Aorta (tissue), 5 donors: ENCODE measurements at regions of chr10 and their contacts with region 1.

Region 1: DNA sequence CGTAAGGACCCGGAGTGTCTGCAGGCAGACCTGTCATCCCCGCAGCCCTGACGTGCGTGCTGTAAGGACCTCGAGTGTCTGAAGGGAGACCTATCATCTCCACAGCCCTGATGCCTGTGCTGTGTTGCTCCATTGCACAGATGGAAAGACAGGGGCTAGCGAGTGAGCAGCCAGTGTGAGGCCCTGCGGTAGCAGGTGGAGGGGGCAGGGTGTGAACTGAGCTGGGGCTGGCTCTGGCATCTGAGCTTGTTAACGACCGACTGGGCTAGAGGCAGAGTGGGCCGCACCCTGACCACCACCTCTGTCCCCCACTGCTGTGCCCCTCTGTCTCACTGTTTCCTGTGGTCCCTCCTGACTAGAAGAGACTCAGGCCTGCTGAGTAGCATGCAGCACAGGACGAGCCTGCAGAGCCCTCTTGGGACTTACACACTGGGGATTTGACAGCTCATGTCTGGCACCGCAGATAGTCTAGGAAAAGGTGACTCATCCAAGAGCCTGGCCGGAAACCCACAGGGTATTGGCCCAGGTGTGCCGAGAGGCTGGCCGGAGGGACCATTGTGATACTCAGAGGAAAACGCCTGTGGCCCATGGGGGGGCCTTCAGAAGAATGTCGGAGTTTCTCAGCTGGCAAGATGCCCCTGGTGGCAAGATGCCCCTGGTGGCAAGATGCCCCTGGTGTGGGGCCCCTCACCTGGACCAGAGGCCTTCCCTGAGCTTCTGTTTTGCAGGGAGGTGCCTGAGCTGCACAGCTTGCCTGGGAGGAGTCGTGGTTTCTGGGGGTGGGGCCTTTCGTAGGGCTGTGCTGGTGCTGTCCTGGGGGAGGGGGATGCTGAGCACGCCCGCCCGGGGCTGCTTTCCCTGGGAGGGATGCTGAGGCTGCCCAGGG is 34.3 kb downstream of the INPP5A start:
- DNase-seq: peak; percentile 56 to 82
- ATAC-seq: peak; percentile 53
- H3K4me3 ChIP-seq: no peak overlapping the region
- H3K27ac ChIP-seq: peak overlapping the region in 1 of 2 donors; percentile 25
- H3K4me1 ChIP-seq: peaks cover 0 to 2% of the 10 kb centered on the region in 2 donors
- H3K27me3 ChIP-seq: no peaks in the 10 kb centered on the region

Region 2: GRCh38 chr10:132458593-132459300 is 113.1 kb before region 1 on chr10:
- intact Hi-C with region 1: loop called (anchors 2 kb)
- DNase-seq: peak; percentile 64 to 89
- ATAC-seq: peak; percentile 70
- H3K4me3 ChIP-seq: no peak overlapping the region
- H3K27ac ChIP-seq: no peak overlapping the region
- H3K4me1 ChIP-seq: no peaks in the 10 kb centered on the region
- H3K27me3 ChIP-seq: no peaks in the 10 kb centered on the region

Region 3: DNA sequence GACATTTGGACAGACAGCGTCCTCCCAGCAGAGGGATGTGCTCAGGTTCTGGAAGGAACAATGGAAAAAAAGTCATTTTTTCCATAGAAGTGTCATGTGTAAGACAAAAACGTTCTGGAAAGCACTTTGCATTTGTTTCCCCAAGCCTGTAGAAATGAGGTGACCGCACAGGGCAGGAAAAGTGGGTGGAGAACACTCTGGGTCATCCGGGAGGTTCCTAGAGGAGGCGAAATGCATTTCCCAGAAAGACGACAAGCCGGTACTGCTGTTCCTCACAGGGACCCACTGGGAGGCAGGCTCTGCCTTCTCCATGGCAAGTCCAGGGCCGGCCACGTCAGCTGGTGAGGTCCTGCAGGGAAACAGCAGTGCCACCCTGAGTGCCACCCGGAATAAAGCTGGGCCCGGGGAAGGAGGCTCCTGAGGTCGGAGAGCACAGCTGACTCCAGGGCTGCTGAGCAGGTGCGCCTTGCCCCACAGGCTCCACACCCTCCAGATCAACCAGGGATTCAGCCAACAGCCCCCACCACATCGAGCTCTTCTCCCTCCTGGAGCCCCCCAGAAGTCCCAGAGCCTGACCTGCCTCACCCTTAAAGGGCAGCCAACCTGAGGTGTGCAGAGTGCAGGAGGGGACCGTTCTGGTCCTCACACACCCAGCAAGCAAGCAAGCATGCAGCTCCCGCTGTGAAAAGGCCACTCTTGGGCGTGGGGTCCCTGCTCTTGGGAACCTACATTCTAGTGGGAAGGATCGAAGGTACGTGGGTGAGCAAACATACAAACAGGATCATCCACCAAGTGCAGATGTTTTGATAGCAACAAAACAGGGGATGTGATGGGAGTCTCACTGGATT is 63.1 kb before region 1 on chr10:
- intact Hi-C with region 1: loop called (anchors 2 kb)
- DNase-seq: peak; percentile 85 to 92
- ATAC-seq: peak; percentile 74
- H3K4me3 ChIP-seq: no peak overlapping the region
- H3K27ac ChIP-seq: no peak overlapping the region
- H3K4me1 ChIP-seq: no peaks in the 10 kb centered on the region
- H3K27me3 ChIP-seq: no peaks in the 10 kb centered on the region

Region 4: DNA sequence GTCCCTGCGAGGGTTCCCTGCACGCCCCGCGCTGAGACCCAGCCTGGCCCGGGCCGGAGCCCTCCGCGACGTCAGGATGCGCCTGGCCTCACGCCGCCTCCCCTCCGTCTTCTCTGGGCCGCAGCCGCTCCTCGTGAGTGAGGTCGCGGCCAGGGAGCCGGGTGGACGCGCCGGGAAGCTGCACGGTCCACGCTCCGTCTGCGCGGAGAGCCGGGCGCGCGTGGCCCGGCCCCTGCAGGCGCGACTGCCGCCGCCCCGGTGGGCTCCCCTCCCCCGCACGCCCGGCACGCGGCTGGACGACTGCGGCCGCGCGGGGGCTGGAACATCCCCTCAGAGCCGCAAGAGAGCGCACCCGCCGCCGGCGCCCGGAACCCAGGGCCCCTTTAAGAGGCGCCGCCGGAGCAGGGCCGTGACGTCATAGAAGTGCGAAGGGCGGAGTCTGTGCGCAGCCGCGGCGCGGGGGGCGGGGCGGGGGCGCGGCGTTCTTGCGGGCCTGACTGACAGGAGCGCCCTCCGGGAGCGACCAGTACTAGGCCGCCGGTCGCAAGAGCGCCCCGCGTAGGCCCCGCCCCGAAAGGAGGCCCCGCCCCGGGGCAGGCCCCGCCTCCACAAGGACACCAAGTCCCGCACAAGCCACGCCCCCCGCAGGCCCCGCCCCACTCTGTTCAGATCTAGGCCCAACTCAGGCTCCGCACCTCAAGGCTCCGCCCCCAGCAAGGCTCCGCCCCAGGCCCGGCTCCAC is 34.8 kb before region 1 on chr10:
- intact Hi-C with region 1: loop called in 1 of 2 experiments (anchors 5 kb)
- DNase-seq: peak; percentile 100
- ATAC-seq: peak; percentile 98
- H3K4me3 ChIP-seq: peak overlapping the region; percentile 20 to 53
- H3K27ac ChIP-seq: peak overlapping the region in 1 of 2 donors; percentile 37
- H3K4me1 ChIP-seq: no peaks in the 10 kb centered on the region
- H3K27me3 ChIP-seq: no peaks in the 10 kb centered on the region